B cell (primary cell): ENCODE measurements at regions of chr12 and their contacts with region 1.

Region 1: DNA sequence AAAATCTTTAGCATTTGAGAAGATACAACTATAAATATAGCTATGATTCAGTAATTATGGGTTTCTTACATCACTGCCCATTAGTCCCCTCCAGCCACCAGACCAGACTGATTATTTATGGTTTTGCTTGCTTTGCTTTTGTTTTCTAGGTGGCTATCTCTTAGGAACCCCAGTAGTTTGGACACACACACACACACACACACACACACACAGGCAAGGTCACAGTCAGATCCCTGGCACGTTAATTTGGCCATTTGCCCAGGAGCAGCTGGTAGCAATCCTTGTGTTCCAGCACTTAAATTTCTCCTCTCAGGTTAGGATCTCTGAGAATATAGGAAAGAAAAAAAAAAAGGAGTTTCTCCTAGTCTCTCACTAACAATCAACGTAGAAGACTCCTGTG is 90.2 kb upstream of the RESF1 start:
- DNase-seq: no peak
- ATAC-seq: no peak
- H3K4me3 ChIP-seq: no peak overlapping the region
- H3K4me3 Mint-ChIP-seq: no peak overlapping the region
- H3K27ac ChIP-seq: peak overlapping the region in 1 of 2 donors; percentile 5
- H3K27ac Mint-ChIP-seq: peak overlapping the region; percentile 68
- H3K4me1 ChIP-seq: peaks cover 37 to 51% of the 10 kb centered on the region in 2 donors
- H3K4me1 Mint-ChIP-seq: peaks cover 60% of the 10 kb centered on the region
- H3K27me3 ChIP-seq: no peaks in the 10 kb centered on the region
- H3K27me3 Mint-ChIP-seq: no peaks in the 10 kb centered on the region
- CTCF ChIP-seq: no peak

Region 2: DNA sequence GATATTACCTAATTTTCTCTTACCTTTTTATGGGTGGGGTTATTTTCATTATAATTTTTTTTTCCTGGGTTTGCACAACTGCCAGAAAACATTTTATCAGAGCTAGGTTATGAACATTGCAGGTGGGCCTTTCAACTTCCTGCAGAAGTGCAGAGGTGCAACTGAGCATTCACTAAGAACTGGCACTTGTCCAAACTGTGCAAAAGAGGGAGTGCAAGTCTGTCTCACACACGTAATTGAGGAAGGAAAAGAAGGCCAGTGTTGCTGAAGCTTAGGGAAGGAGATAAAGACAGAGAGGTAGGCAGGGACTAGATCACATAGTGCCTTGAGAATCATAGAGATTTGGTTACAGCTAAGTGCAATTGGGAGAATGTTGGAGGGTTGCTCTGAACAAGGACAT is 126.1 kb before region 1 on chr12:
- CTCF ChIA-PET with region 1: no interaction called
- POLR2A ChIA-PET with region 1: no interaction called
- intact Hi-C with region 1: no loop called
- DNase-seq: peak; percentile 86
- ATAC-seq: peak; percentile 64
- H3K4me3 ChIP-seq: peak overlapping the region in 1 of 5 experiments; percentile 21
- H3K4me3 Mint-ChIP-seq: peak overlapping the region; percentile 35
- H3K27ac ChIP-seq: peak overlapping the region; percentile 2 to 68
- H3K27ac Mint-ChIP-seq: peak overlapping the region; percentile 69
- H3K4me1 ChIP-seq: peaks cover 80 to 81% of the 10 kb centered on the region in 2 donors
- H3K4me1 Mint-ChIP-seq: peaks cover 77% of the 10 kb centered on the region
- H3K27me3 ChIP-seq: no peaks in the 10 kb centered on the region
- H3K27me3 Mint-ChIP-seq: no peaks in the 10 kb centered on the region
- CTCF ChIP-seq: no peak

Region 3: DNA sequence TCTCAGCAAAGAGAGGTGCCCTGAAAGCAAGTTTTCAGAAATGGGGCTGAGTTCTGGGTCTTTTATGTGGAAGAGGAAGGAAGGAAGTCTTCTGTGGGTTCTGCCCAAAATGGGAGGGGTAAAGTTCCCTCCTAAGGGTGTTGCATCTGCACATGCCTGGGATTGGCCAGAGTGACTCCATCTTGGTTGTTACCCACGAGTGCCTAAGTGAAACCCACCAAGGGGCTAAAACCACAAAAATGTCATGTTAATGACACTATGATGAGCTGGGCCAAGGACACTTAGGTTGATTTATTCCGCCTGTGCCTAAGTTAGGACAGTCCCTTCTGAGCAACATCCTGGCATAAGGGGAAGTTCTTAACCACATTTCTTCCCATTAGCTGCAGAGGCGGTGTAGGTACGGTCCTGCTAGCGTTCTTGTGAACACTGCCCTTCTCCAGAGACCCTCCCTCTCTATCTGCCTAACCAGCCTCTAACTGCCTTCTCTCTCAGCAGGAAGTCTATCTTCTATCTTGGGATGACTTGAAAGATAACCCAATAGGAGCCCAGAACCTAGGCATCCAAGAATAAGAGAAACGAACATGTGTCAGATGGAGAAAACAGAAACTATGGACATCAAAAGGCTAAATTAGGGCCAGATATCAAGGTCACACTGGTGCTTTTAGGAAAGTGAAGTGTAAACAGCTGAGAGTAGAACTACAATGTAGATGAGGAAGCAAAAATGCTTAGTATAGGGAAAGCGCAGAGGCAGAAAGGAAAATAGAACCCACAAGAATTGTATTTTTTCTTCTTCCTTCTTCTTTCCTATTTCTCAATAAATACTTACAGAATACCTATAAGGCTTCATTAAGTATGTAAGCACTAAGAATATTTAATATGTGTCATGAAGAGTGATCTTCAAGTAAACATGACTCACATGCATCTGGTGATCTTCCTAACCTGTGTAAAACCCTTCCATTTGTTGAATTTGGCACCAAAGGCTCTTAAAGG is 35.9 kb before region 1 on chr12:
- CTCF ChIA-PET with region 1: interaction called, 4 read pairs
- POLR2A ChIA-PET with region 1: interaction called, 3 read pairs
- intact Hi-C with region 1: loop called (anchors 5 kb)
- DNase-seq: peak; percentile 84
- ATAC-seq: peak; percentile 80
- H3K4me3 ChIP-seq: peak overlapping the region in 1 of 5 experiments; percentile 47
- H3K4me3 Mint-ChIP-seq: peak overlapping the region; percentile 82
- H3K27ac ChIP-seq: peak overlapping the region; percentile 65 to 78
- H3K27ac Mint-ChIP-seq: peak overlapping the region; percentile 96
- H3K4me1 ChIP-seq: peaks cover 58 to 70% of the 10 kb centered on the region in 2 donors
- H3K4me1 Mint-ChIP-seq: peaks cover 70% of the 10 kb centered on the region
- H3K27me3 ChIP-seq: no peaks in the 10 kb centered on the region
- H3K27me3 Mint-ChIP-seq: no peaks in the 10 kb centered on the region
- CTCF ChIP-seq: no peak